ENCODE measurements at regions of chr11 and their contacts with region 1.

Region 1: GRCh38 chr11:65180877-65181568 is 705 bp upstream of the CAPN1 start:
- DNase-seq: peak; percentile 57
- H3K4me3 ChIP-seq: peak overlapping the region; percentile 57 to 95 (median 94)
- H3K27ac ChIP-seq: peak overlapping the region; percentile 56
- H3K4me1 ChIP-seq: peaks cover 26% of the 10 kb centered on the region
- H3K27me3 ChIP-seq: no peaks in the 10 kb centered on the region
- CTCF ChIP-seq: peak; percentile 25 to 65

Region 2: GRCh38 chr11:64854534-64855429 is 326.2 kb before region 1 on chr11:
- CTCF ChIA-PET with region 1: no interaction called
- dilution Hi-C with region 1: no loop called
- in situ Hi-C with region 1: no loop called
- intact Hi-C with region 1: loop called (anchors 2 kb)
- DNase-seq: peak; percentile 93
- H3K4me3 ChIP-seq: no peak overlapping the region
- H3K27ac ChIP-seq: peak overlapping the region; percentile 68
- H3K4me1 ChIP-seq: peaks cover 48% of the 10 kb centered on the region
- H3K27me3 ChIP-seq: no peaks in the 10 kb centered on the region
- CTCF ChIP-seq: no peak

Region 3: GRCh38 chr11:65027213-65028067 is 153.6 kb before region 1 on chr11 and contains the start of gene SNX15:
- CTCF ChIA-PET with region 1: no interaction called
- dilution Hi-C with region 1: no loop called
- in situ Hi-C with region 1: no loop called
- intact Hi-C with region 1: loop called (anchors 5 kb)
- DNase-seq: peak; percentile 96
- H3K4me3 ChIP-seq: peak within 1 kb of the TSS; percentile 54 to 80 (median 72)
- H3K27ac ChIP-seq: peak within 1 kb of the TSS; percentile 41
- H3K4me1 ChIP-seq: peaks cover 11% of the 10 kb centered on the region
- H3K27me3 ChIP-seq: no peaks in the 10 kb centered on the region
- CTCF ChIP-seq: peak; percentile 34 to 66
- total RNA-seq, gene SNX15: 12.3 to 19.7 TPM

Region 4: DNA sequence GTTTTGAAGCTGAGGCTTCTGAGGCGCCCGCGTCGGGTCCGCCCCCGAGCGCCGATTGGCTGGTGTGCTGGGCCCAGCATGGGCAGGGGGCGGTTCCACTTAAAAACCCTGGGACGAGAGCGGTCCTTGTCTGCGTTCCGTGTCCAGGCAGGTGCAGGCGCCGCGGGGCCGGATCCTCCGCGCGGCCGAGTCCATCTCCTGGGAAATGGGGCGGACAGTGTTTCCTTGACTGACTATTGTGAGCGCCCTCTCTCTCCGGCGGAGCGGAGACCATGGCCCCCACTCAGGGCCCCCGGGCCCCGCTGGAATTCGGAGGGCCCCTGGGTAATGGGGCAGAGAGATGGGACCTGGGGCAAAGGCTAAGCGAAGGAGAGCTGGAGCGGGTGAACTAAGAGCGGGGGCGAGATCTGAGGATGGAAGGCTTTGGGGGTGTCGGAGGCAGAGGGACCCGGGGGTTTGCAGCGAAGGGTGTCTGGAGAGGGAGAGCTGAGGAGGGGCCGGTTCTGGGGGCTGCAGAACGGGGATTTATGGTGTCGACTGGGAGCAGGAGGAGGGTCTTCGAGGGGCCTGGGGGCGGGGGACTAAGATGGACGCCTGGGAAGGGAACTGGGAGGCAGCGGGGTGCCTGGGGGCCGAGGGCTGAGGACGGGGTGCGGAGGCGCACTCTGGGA is 69.1 kb before region 1 on chr11 and contains the start of gene TM7SF2:
- CTCF ChIA-PET with region 1: interaction called, 3 read pairs
- dilution Hi-C with region 1: no loop called
- in situ Hi-C with region 1: no loop called
- intact Hi-C with region 1: loop called (anchors 1 kb)
- DNase-seq: peak; percentile 93
- H3K4me3 ChIP-seq: peak within 1 kb of the TSS; percentile 45 to 51 (median 49)
- H3K27ac ChIP-seq: no peak within 1 kb of the TSS
- H3K4me1 ChIP-seq: peaks cover 38% of the 10 kb centered on the region
- H3K27me3 ChIP-seq: no peaks in the 10 kb centered on the region
- CTCF ChIP-seq: no peak
- total RNA-seq, gene TM7SF2: 8.7 to 10.1 TPM

Region 5: GRCh38 chr11:65134386-65135253 is 46.4 kb before region 1 on chr11 and contains the start of gene SYVN1:
- CTCF ChIA-PET with region 1: no interaction called
- dilution Hi-C with region 1: no loop called
- in situ Hi-C with region 1: loop called in 1 of 2 experiments (anchors 5 kb)
- intact Hi-C with region 1: loop called (anchors 1 kb)
- DNase-seq: peak; percentile 98
- H3K4me3 ChIP-seq: peak within 1 kb of the TSS; percentile 83 to 86 (median 85)
- H3K27ac ChIP-seq: peak within 1 kb of the TSS; percentile 97
- H3K4me1 ChIP-seq: peaks cover 15% of the 10 kb centered on the region
- H3K27me3 ChIP-seq: no peaks in the 10 kb centered on the region
- CTCF ChIP-seq: no peak
- total RNA-seq, gene SYVN1: 21.5 to 45.8 TPM

Region 6: DNA sequence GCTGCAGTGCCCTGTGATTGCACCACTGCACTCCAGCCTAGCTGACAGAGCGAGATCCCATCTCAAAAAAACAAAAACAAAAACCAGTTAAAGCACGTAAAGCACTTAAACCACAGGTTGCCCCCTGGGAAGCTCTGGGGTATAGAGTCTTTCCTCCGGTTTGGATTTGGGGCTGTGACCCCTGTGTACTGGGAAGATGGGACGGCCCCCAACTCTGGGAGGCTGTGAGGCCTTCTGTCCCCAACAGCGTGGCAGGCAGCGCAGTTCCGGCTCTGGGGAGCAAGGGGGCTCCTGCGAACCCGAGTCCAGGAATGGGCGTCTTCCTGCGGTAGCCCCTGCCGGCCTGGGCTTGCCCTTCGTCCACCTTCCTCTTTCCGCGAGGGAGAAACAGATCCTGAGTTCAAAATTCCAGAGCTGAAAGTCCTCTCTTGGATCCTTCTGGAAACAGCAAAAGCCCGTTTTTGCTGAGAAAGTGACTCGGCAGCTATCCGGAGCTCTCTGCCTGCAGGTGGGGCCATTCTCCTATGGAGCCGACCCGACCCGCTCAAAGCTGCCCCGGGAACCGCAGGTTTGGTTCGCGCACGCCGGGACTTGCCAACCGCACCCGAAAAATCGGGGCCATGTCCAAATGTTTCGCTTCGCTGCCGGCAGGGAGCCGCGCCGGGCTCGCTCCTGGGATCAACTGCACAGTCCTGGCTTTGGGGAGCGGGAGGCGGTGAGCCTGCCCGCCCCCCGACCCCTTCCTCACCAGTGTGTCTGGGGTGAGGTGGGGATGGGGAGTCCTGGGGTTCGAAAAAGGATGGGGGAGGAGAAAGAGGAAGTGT is 44.5 kb after region 1 on chr11:
- CTCF ChIA-PET with region 1: no interaction called
- dilution Hi-C with region 1: no loop called
- in situ Hi-C with region 1: no loop called
- intact Hi-C with region 1: loop called (anchors 1 kb)
- DNase-seq: peak; percentile 77
- H3K4me3 ChIP-seq: peak overlapping the region; percentile 39 to 46 (median 45)
- H3K27ac ChIP-seq: peak overlapping the region; percentile 45
- H3K4me1 ChIP-seq: peaks cover 19% of the 10 kb centered on the region
- H3K27me3 ChIP-seq: no peaks in the 10 kb centered on the region
- CTCF ChIP-seq: peak; percentile 21 to 62

Region 7: GRCh38 chr11:65314501-65315203 is 133.6 kb after region 1 on chr11 and contains the start of gene CDC42EP2:
- CTCF ChIA-PET with region 1: no interaction called
- dilution Hi-C with region 1: no loop called
- in situ Hi-C with region 1: no loop called
- intact Hi-C with region 1: loop called (anchors 2 kb)
- DNase-seq: peak; percentile 82
- H3K4me3 ChIP-seq: peak within 1 kb of the TSS; percentile 77 to 91 (median 88)
- H3K27ac ChIP-seq: peak within 1 kb of the TSS; percentile 46
- H3K4me1 ChIP-seq: peaks cover 13% of the 10 kb centered on the region
- H3K27me3 ChIP-seq: no peaks in the 10 kb centered on the region
- CTCF ChIP-seq: no peak
- total RNA-seq, gene CDC42EP2: 6.8 to 24.8 TPM

Measured in mammary epithelial cell (primary cell).